ENCODE measurements at regions of chr12 and their contacts with region 1.

Region 1: DNA sequence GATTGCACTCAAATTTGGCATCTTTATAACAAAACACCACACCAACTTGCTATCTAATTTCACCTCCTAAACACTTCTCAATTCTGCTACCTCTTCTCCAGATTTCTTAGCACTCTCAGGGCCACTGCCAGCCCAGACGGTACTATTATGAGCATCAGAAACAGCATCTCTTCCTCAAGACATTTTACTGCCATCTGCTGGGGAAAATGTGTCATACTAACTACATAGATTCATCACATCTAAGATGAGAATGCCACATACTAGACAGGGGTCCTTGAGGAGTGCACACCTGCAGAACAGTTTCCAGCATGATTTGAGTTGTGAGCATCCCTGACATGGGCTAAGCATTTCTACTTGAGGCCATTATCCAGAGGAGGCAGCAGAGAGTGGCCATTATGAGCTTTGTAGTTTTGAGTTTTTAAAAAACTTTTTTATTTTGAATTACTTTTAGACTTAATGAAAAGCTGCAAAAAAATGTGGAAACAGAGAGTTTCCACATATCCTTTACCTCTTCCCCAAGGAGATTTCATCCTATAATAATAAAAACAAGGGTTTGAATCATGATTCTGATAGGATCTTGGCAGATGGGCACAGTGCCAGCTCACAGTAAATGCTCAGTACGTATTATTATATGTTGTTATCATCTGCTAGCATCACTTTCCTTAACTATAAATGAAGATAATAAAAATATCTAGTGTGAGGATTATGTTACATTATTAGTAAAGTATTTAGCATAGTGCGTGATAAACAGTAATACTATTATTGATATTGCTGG is 15.2 kb upstream of the GRIP1 start:
- DNase-seq: no peak
- H3K4me3 ChIP-seq: no peak overlapping the region
- H3K27ac ChIP-seq: no peak overlapping the region
- H3K4me1 ChIP-seq: no peaks in the 10 kb centered on the region
- H3K27me3 ChIP-seq: no peaks in the 10 kb centered on the region
- CTCF ChIP-seq: peak in 2 of 3 experiments; percentile 28 to 36
- POLR2A ChIP-seq: no peak

Region 2: DNA sequence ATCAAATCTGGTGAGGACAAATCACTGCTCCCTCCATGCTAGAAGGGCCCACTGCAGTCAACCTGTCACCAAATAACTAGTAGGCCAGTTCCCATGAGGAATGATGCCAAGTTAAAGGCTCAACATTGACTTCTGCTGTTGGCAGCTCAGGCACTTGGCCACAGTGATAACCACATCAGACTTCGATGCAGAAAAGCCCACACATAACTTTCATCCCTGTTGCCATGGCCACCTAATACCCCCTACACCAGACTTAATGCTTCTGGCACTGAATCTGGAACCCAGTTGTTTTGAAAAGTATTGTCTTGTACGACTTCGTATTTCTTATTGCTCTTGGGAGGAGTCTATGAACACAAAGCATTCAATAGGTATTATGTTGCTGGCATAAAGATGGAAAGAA is 436.1 kb before region 1 on chr12:
- intact Hi-C with region 1: loop called (anchors 10 kb)
- DNase-seq: no peak
- H3K4me3 ChIP-seq: no peak overlapping the region
- H3K27ac ChIP-seq: no peak overlapping the region
- H3K4me1 ChIP-seq: no peaks in the 10 kb centered on the region
- H3K27me3 ChIP-seq: no peaks in the 10 kb centered on the region
- CTCF ChIP-seq: no peak
- POLR2A ChIP-seq: no peak

Measured in vagina (tissue), 2 donors.